HEK293T (cell line): ENCODE measurements at regions of chr1 and their contacts with region 1.

Region 1: DNA sequence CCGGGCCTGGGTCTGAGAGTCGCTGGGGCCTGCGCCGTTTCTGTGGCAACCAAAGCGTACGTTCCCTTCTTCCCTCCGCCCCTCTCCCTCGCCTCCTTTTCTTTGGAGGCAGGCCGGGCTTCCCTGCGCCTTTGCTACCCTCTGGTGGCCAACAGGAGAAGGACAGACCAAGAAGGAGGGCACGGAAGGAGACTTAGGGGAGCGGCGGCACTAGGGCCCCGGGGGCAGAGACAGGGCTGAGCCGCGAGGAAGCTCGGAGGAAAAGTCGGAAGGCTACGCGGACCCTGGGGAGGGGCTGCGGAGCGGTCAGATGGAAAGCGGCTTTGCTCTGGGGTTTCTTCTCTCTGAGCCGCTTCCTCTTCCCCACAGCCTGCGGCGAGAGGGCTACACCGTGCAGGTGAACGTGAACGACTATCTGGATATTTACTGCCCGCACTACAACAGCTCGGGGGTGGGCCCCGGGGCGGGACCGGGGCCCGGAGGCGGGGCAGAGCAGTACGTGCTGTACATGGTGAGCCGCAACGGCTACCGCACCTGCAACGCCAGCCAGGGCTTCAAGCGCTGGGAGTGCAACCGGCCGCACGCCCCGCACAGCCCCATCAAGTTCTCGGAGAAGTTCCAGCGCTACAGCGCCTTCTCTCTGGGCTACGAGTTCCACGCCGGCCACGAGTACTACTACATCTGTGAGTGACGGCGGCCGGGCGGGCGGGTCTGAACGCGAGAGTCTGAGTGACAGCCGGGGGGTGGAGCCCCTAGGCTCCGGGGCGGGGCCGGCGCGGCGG is 6.3 kb downstream of the EFNA3 start:
- DNase-seq: peak; percentile 94

Region 2: GRCh38 chr1:154992721-154993571 is 92.0 kb before region 1 on chr1:
- CTCF ChIA-PET with region 1: no interaction called
- POLR2A ChIA-PET with region 1: no interaction called
- DNase-seq: no peak

Region 3: GRCh38 chr1:155044812-155045690 is 39.9 kb before region 1 on chr1:
- CTCF ChIA-PET with region 1: interaction called, 10 read pairs
- POLR2A ChIA-PET with region 1: interaction called, 3 read pairs
- DNase-seq: peak; percentile 82

Region 4: DNA sequence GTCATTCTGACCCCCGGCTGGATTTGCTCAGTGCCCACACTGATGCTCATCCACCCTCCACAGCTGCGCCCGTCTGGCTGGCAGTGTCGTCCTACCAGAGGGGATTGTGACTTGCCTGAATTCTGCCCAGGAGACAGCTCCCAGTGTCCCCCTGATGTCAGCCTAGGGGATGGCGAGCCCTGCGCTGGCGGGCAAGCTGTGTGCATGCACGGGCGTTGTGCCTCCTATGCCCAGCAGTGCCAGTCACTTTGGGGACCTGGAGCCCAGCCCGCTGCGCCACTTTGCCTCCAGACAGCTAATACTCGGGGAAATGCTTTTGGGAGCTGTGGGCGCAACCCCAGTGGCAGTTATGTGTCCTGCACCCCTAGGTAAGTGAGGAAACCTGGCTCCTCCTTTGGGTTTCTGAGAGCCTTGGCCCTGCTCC is 27.1 kb before region 1 on chr1:
- CTCF ChIA-PET with region 1: interaction called, 43 read pairs
- POLR2A ChIA-PET with region 1: interaction called, 20 read pairs
- DNase-seq: no peak

Region 5: DNA sequence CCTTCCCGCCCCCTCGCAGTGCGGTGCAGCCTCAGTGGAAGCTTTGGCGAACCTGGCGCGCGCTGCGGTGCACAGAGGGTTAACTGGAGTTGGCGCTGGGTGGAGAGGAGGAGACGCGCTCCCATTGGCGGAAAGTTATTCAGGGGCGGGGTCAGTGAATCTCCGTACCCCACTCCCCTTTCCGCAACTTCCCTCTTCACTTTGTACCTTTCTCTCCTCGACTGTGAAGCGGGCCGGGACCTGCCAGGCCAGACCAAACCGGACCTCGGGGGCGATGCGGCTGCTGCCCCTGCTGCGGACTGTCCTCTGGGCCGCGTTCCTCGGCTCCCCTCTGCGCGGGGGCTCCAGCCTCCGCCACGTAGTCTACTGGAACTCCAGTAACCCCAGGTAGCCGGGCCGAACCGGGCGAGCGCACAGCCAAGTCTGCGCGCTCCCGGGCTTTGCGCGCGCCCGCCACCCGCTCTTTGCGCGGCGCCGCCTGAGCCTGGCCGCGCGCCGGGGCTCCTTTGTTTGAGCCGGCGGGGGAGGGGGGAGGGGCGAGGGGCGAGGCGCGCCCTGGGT is 21.3 kb before region 1 on chr1 and contains the start of gene EFNA4:
- CTCF ChIA-PET with region 1: interaction called, 43 read pairs
- POLR2A ChIA-PET with region 1: interaction called, 20 read pairs
- DNase-seq: peak; percentile 90

Region 6: DNA sequence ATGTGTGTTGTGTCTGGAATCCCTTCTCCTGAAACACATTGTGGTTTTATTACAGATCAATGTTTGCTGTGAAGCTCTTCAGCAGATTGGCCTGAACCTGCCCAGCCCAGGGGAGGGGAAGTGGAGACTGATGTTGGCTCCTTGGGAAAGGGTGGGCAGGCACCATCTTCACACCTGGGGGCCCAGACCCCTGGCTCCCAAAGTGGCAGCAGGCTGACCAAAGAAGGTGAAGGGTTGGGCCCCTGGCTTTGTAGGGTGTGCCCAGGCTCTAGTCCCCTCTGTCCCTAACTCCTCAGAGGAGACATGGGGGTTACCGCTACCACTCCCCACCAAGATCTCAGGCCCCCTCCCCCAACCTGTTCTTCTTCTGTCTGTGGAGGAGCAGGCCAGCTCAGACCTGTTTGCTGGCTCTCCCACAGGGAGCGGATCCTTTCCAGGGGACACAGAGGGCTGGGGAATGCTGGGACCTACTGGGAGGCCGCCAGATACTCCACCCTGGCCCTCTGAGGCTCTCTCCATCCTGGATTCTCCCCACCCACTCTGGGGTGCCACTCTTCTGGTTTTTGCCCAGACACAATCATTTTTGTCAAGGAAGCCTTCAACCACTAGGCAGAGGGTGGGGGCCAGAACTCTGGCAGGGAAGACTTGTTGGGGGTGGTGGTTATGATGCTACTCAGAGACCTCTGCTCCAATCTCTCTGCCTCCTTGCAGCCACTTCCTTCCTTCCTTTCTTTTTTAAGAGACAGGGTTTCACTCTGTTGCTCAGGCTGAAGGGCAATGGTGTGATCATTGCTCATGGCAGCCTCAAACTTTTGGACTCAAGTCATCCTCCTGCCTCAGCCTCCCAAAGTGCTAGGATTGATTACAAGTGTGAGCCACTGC is 11.3 kb before region 1 on chr1:
- CTCF ChIA-PET with region 1: interaction called, 24 read pairs
- POLR2A ChIA-PET with region 1: interaction called, 5 read pairs
- DNase-seq: no peak

Region 7: GRCh38 chr1:155167166-155168104 is 82.5 kb after region 1 on chr1:
- CTCF ChIA-PET with region 1: interaction called, 89 read pairs
- POLR2A ChIA-PET with region 1: interaction called, 13 read pairs
- DNase-seq: peak; percentile 90

Region 8: DNA sequence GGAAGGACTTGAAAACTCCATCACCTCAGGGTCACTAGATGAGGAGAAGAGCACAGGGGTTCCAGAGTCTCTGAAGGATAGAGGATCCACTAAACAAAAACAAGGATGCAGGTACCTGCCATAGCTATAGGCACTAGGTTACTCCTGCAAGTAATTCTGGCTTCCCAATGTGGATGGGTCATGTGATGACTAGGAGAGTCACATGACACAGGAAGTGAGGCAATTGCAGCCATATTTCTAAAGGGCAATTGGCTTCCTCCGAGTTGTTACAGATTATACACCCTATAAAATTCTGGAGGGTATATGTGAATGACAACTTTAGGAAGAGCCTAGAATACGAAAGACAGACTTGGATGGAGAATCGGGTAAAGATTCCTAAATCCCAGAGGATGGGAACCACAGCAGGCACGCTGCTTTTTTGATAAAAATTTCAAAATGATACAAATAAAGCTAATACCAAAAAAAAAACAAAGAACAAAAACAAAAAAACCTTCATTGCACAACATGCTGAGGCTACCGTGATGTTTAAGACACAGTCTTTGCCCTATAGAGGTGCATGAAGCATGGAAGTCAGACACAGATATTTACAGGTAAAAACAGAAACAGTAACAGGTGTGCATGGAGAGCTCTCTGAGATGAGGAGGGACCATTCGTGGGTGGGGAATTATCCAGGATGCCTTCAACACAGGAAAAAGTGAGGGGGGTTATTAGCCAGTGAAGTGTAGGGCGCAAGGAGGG is 134.1 kb after region 1 on chr1:
- CTCF ChIA-PET with region 1: no interaction called
- POLR2A ChIA-PET with region 1: no interaction called
- DNase-seq: peak; percentile 74